ENCODE measurements at regions of chr11 and their contacts with region 1.

Region 1: GRCh38 chr11:106021967-106022794 is at the start of gene MSANTD4:
- DNase-seq: peak; percentile 99 to 100 (median 100)
- H3K4me3 ChIP-seq: peak within 1 kb of the TSS; percentile 61 to 100 (median 93)
- H3K27ac ChIP-seq: peak within 1 kb of the TSS; percentile 56 to 96 (median 90)
- H3K27me3 ChIP-seq: no peaks in the 10 kb centered on the region
- CTCF ChIP-seq: peak in 35 of 56 donors; percentile 5 to 65 (median 28)
- total RNA-seq, gene MSANTD4: 40.4 to 82.2 (median 55.3) TPM

Region 2: DNA sequence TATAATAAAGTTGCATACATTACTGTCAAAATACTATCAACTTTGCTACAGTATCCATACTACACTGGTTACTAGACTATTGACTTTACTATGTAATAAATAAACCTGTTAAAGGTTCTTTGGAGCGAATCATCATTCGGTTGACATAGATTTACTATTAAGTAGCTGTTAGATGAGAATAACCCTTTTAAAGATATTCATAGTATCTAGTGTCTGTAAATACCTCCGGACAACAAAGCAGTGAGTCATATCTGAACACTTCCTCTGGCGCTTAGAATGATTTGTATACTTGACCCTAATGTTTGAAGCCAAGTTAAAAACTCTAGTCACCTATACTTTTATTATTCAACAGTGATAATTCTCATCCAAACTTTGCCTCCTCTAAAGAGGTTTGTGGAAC is 84.8 kb before region 1 on chr11:
- intact Hi-C with region 1: loop called in 1 of 2 experiments (anchors 5 kb)
- DNase-seq: no peak
- H3K4me3 ChIP-seq: no peak overlapping the region
- H3K27ac ChIP-seq: peak overlapping the region in 51 of 59 donors; percentile 1 to 85 (median 63)
- H3K27me3 ChIP-seq: no peaks in the 10 kb centered on the region
- CTCF ChIP-seq: no peak

Region 3: GRCh38 chr11:106063009-106063408 is 40.8 kb after region 1 on chr11:
- intact Hi-C with region 1: loop called in 1 of 2 experiments (anchors 5 kb)
- DNase-seq: no peak
- H3K4me3 ChIP-seq: no peak overlapping the region
- H3K27ac ChIP-seq: peak overlapping the region in 2 of 59 donors; percentile 30 to 76
- H3K27me3 ChIP-seq: no peaks in the 10 kb centered on the region
- CTCF ChIP-seq: no peak